ENCODE measurements at regions of chr18 and their contacts with region 1.

Region 1: GRCh38 chr18:58529714-58530354 is 99.1 kb downstream of the ALPK2 start:
- DNase-seq: no peak

Region 2: GRCh38 chr18:58661423-58661822 is 131.6 kb after region 1 on chr18:
- intact Hi-C with region 1: loop called (anchors 5 kb)
- DNase-seq: no peak

Region 3: DNA sequence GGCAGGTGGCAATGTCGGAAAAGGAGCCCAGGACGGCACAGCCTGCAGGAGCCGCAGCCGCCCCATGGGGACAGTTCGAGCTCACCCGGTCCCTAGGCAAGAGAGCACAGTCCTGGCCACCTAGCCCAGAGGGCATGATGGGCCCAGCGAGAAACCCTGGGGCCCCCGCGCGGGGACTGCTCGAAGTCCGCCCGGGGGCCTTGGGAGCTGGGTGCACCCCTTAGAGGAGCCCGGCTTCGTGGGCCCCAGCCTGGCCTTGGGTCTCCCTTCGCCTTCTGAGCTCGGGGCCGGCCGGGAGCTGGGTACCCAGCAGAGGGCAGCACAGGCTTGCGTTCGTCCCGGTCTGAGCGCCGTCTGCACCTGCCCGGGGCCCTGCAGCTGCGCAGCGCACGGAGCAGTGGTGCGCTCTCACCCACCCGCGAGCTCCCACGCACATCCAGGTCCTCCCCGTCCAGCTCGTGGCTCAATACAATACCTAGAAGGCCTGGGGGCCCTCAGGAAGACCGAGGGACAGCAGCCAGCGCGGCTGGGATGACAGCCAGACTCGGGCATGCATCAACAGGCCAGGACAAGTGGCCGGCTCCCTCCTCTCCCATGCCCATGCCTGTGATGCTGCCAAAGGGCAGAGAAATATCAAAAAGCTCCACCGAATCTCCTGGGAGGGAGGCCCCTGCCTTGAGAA is 238.6 kb after region 1 on chr18:
- intact Hi-C with region 1: loop called (anchors 1 kb)
- DNase-seq: peak; percentile 84

Region 4: GRCh38 chr18:59070181-59070912 is 540.5 kb after region 1 on chr18:
- intact Hi-C with region 1: loop called (anchors 10 kb)
- DNase-seq: peak; percentile 82

Region 5: DNA sequence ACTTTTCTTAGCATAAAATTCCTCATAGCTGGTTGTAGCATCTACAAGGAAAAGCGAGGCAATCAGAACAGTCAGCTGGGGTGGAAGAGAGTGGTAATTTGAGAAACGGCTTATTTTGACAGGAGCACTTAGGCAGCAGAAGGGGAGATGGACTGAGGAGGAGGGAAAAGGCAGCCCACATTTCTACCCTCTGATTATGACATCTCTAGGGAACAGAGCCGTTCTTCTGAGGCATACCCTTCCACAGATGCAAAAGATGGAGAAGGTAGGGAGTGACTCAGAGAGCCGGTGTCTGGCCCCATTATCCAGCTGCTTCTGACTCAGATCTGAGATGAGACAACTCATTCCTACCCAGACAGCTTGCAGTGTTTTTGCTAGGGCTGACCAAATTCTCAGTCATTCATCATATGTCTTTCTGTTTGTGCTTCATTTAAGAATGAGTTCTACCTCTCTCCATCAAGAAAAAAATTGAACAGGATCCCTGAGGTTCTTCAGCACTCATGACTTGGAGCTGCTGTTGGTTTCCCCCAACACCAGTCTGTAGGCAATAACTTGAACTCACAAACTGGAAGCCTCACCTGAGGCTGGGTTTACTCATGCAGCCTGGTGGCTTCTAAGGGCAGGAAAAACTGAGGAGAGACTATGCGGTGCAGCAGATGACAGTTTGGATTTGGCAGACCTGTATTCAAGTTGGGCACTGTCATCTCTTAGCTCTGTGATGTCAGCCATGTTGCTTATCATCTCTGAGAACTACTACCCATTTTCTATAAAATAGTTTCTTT is 593.9 kb after region 1 on chr18:
- intact Hi-C with region 1: no loop called
- DNase-seq: no peak

Measured in cardiac septum (tissue), 1 donor.